Activated CD8-positive, alpha-beta T cell treated with anti-CD3 and anti-CD28 coated beads, Interleukin-2, amount 10 ng/mL, durations not matched to agents 7 days and 5 days (primary cell): ENCODE measurements at regions of chr7 and their contacts with region 1.

Region 1: DNA sequence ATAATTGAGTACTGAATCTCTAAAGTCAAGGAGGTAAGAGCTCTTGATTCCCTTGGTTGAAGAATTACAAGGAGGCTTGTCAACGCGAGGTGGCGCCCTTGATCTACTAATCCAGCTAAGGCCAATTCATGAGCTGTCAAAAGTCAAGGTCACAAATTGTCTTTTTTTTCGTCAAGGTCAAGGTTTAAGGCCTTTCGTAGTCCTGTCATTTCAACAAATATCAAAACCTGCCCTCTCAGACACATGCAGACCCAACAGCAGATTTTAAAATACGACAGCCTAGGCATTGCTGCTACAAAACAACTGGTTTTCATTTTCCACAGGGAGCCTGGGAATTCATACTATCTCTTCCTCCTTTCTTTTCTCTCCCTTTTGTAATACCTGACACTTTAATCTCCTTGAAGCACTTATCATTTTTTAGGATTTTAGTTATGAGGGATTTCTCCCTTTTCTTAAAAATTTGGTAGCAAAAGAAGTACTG is 3.6 kb downstream of the HOXA13 start:
- DNase-seq: peak; percentile 85
- ATAC-seq: no peak
- H3K4me3 Mint-ChIP-seq: no peak overlapping the region
- H3K27ac Mint-ChIP-seq: no peak overlapping the region
- H3K4me1 Mint-ChIP-seq: peaks cover 28% of the 10 kb centered on the region
- H3K27me3 Mint-ChIP-seq: peaks cover 77% of the 10 kb centered on the region

Region 2: DNA sequence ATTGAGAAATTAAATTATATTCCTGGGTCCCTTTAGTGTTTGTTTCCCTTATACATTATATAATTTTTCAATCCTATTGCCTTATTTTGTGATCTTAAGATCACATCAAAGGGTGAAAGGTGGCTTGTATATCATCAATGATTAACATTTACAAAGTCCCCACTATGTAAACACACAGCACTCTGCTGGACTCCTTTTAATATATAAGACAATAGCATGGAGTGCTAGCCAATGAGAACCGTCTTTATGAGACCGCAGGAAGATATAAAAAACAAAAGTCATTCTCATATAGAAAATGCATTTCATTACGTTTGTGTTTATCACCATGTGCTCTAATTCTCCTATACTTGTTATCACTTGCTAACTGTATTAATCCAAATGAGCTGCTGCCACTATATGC is 209.0 kb before region 1 on chr7:
- CTCF ChIA-PET with region 1: no interaction called
- POLR2A ChIA-PET with region 1: no interaction called
- DNase-seq: no peak
- ATAC-seq: no peak
- H3K4me3 Mint-ChIP-seq: no peak overlapping the region
- H3K27ac Mint-ChIP-seq: no peak overlapping the region
- H3K4me1 Mint-ChIP-seq: no peaks in the 10 kb centered on the region
- H3K27me3 Mint-ChIP-seq: no peaks in the 10 kb centered on the region

Region 3: GRCh38 chr7:27150568-27151340 is 45.6 kb before region 1 on chr7:
- CTCF ChIA-PET with region 1: interaction called, 10 read pairs
- POLR2A ChIA-PET with region 1: no interaction called
- DNase-seq: peak; percentile 67
- ATAC-seq: peak; percentile 76
- H3K4me3 Mint-ChIP-seq: peak overlapping the region; percentile 56
- H3K27ac Mint-ChIP-seq: no peak overlapping the region
- H3K4me1 Mint-ChIP-seq: peaks cover 36% of the 10 kb centered on the region
- H3K27me3 Mint-ChIP-seq: peaks cover 90% of the 10 kb centered on the region

Region 4: DNA sequence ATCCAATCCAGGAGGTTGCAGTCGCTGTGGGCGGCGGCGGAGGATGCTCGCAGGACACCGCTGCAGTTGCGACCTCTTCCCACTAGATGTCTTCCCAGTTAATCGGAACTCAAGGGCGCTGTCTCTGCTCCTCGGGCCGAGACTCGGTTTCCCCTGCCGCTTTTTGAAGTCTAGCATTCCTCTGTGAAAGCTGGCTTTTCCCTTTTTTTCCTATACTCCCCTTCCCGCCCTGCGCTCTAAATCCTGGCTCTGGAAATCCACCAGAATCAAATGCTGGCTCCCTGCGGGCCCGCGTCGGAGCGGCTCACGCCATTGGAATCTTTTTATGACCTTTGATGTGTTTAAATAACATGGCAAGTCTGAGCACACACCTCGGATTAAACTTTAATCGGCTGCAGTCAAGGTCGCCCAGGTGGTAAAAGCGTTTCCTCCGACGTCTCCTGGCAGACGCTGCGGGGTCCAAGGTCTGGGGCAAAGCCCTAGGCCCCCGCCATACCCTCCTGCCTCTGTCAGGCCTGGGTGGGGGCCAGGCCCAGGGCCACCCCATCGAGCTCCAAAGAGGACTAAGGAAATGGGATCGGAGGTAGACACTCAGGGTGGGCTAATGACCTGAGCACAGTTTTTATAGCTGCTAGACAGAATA is 14.2 kb after region 1 on chr7:
- CTCF ChIA-PET with region 1: interaction called, 21 read pairs
- POLR2A ChIA-PET with region 1: no interaction called
- DNase-seq: peak; percentile 60
- ATAC-seq: no peak
- H3K4me3 Mint-ChIP-seq: no peak overlapping the region
- H3K27ac Mint-ChIP-seq: no peak overlapping the region
- H3K4me1 Mint-ChIP-seq: peaks cover 9% of the 10 kb centered on the region
- H3K27me3 Mint-ChIP-seq: peaks cover 82% of the 10 kb centered on the region

Region 5: DNA sequence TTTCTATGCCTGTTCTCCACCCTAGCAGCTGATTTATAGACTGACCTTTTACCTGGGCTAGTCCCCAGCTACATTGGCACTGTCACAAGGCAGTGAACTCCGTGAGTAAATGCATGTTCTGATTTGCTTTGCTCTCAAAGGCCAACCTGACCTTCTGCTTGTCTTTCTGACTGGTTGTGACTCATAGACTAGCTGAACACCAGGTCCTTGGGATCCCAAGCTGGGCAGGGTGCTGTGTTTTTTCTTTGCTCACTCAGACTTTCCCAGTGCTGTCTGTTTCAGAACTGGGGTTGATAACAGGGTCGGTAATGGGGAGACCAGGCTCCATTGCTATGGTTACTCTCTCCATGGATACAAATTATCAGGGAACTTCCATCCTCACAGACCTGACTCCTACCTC is 81.3 kb after region 1 on chr7:
- CTCF ChIA-PET with region 1: no interaction called
- POLR2A ChIA-PET with region 1: no interaction called
- DNase-seq: no peak
- ATAC-seq: no peak
- H3K4me3 Mint-ChIP-seq: no peak overlapping the region
- H3K27ac Mint-ChIP-seq: no peak overlapping the region
- H3K4me1 Mint-ChIP-seq: no peaks in the 10 kb centered on the region
- H3K27me3 Mint-ChIP-seq: no peaks in the 10 kb centered on the region

Region 6: DNA sequence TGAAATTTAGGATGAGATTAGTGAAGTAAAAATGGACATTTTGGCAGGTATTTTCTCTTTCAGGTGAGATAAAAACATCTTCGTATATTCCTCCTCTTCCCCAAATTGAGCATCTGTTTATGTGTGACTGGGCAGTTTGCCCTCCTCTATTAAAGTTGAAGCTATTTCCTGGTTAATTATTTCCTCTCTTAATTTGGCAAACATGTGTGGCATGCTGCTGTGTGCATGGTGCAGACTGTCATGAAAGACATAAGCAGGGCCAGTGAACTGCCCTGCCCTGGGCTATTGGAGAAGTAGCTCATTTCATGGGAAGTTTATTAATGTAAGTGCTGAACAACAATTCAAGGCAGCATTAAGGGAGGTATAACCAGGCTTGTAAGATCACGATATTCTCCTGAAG is 98.9 kb after region 1 on chr7:
- CTCF ChIA-PET with region 1: no interaction called
- POLR2A ChIA-PET with region 1: no interaction called
- DNase-seq: no peak
- ATAC-seq: no peak
- H3K4me3 Mint-ChIP-seq: no peak overlapping the region
- H3K27ac Mint-ChIP-seq: no peak overlapping the region
- H3K4me1 Mint-ChIP-seq: peaks cover 10% of the 10 kb centered on the region
- H3K27me3 Mint-ChIP-seq: peaks cover 4% of the 10 kb centered on the region

Region 7: DNA sequence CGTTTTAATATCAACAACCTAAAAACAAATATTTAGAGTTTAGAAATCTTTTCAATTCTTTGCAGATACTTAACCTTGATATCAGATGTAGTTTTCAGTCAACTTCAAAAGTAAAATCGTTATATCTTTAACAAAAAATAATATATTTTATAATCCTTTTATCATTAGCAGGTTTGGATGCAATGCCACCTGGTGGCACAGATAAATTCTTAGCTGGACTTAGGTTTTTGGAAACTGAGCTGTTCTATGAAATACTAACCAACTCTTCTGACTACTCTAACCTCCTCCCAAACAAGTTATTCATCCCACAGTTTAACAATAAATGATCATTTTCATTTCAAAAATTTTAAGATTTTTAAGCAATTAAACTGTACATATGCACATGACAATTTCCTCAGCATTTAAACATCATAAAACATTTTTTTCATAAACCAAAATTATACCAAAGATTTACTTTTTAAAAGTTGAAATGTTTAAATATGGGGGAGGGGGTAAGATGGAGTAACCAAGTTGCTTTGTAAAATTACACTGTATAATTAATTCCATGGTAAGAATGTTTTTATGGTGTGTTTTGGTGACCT is 409.5 kb after region 1 on chr7:
- CTCF ChIA-PET with region 1: interaction called, 17 read pairs
- POLR2A ChIA-PET with region 1: no interaction called
- DNase-seq: no peak
- ATAC-seq: no peak
- H3K4me3 Mint-ChIP-seq: no peak overlapping the region
- H3K27ac Mint-ChIP-seq: no peak overlapping the region
- H3K4me1 Mint-ChIP-seq: peaks cover 4% of the 10 kb centered on the region
- H3K27me3 Mint-ChIP-seq: no peaks in the 10 kb centered on the region

Region 8: DNA sequence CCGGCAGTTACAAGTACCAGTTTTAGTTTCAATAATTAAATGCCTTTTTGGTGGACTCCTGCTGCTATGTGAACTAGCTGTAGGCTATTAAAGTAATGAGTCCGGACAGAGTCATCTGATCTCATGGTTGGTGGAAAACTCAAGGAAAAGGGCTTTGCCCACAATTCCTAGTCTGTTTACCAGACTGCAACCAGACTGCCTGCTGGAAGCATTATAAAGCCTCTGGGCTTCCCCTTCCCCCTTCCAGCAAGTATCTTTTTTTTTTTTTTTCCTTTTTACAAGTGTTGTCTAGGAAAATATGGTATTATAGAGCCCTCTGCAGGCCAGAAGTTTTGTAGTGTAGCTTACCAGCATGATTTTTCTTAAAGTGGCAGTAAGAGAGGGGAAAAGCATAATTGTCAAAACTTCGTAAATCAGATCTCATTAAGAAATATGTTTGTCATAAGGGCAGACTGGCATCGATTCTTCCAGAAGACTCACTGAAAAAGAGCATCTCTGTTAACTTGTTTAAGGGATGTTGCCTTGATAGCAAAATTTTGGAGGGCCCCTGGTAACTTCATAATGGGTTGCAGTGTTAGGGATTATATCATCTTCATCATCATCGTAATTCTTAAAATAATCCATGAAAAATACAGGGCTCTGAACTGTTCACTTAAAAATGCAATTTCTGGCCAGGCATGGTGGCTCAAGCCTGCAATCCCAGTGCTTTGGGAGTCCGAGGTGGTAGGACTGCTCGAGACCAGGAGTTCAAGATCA is 724.9 kb after region 1 on chr7:
- CTCF ChIA-PET with region 1: interaction called, 11 read pairs
- POLR2A ChIA-PET with region 1: no interaction called
- DNase-seq: peak; percentile 52
- ATAC-seq: no peak
- H3K4me3 Mint-ChIP-seq: no peak overlapping the region
- H3K27ac Mint-ChIP-seq: no peak overlapping the region
- H3K4me1 Mint-ChIP-seq: peaks cover 6% of the 10 kb centered on the region
- H3K27me3 Mint-ChIP-seq: peaks cover 4% of the 10 kb centered on the region

Region 9: GRCh38 chr7:28078036-28078901 is 881.9 kb after region 1 on chr7:
- CTCF ChIA-PET with region 1: interaction called, 13 read pairs
- POLR2A ChIA-PET with region 1: no interaction called
- DNase-seq: peak; percentile 62
- ATAC-seq: no peak
- H3K4me3 Mint-ChIP-seq: no peak overlapping the region
- H3K27ac Mint-ChIP-seq: no peak overlapping the region
- H3K4me1 Mint-ChIP-seq: no peaks in the 10 kb centered on the region
- H3K27me3 Mint-ChIP-seq: peaks cover 9% of the 10 kb centered on the region